ENCODE measurements at regions of chr1 and their contacts with region 1.

Region 1: DNA sequence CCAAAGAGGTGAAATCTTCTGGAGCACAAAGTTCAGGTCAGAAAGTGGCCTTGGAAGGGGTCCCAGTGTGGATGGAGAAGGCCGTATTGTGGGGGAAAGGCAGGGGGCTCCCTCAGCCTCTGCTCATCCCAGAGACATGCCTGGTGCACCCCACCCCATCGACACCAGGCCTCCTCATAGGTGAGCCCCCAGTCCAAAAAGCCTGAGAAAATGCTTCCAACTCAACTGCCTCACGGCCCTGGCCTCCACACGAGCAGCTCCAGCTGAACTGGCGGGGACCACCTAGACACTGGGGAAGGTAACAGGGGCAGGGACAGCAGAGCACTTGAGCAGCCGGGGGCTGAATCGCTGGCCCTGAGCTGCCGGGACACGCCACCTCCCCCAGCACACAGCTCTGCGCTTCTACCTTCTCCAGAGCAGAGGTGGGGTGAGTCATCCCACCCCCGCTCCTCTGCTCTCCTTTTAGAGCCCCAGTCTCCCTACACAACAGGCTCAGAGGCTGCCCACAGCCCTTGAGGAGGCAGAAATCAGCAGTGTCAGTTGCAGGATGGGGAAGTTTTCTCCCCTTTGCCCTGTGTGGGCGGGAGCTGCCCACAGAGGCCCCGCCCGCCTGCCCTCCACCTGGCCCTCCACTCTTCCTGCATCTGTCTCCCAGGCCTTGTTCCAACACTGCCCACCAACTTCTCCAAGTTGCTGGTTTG is 94.5 kb downstream of the STUM start:
- DNase-seq: no peak
- H3K4me3 ChIP-seq: no peak overlapping the region
- H3K27ac ChIP-seq: no peak overlapping the region
- H3K4me1 ChIP-seq: peaks cover 10% of the 10 kb centered on the region
- H3K27me3 ChIP-seq: no peaks in the 10 kb centered on the region
- CTCF ChIP-seq: no peak
- POLR2A ChIP-seq: no peak

Region 2: GRCh38 chr1:226736908-226737818 is 94.1 kb after region 1 on chr1:
- intact Hi-C with region 1: loop called (anchors 10 kb)
- DNase-seq: peak; percentile 58
- H3K4me3 ChIP-seq: peak overlapping the region; percentile 63 to 80
- H3K27ac ChIP-seq: peak overlapping the region; percentile 80 to 87
- H3K4me1 ChIP-seq: peaks cover 20% of the 10 kb centered on the region
- H3K27me3 ChIP-seq: no peaks in the 10 kb centered on the region
- CTCF ChIP-seq: no peak
- POLR2A ChIP-seq: no peak

Region 3: DNA sequence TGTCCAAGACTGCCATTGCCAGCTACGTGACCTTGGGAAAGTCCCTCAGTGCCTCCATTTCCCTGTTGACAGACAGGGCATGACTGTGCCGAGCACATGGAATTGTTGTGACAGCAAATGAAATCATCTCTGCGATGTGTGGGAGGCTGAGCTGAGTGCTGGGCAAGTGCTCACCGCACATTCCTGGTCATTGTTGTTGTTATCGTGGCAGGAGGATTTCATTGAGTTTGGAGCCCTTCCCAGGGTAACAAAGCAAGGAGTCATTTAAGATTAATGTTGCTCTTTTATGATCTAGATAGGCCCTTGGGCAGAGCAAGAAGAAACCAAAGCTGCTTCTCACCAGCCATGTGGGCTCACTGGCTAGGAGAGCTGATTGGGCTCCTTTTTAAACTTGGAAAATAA is 135.6 kb after region 1 on chr1:
- intact Hi-C with region 1: no loop called
- DNase-seq: peak; percentile 69
- H3K4me3 ChIP-seq: no peak overlapping the region
- H3K27ac ChIP-seq: no peak overlapping the region
- H3K4me1 ChIP-seq: peaks cover 14% of the 10 kb centered on the region
- H3K27me3 ChIP-seq: no peaks in the 10 kb centered on the region
- CTCF ChIP-seq: no peak
- POLR2A ChIP-seq: no peak